ENCODE measurements at regions of chr10 and their contacts with region 1.

Region 1: GRCh38 chr10:34746094-34746493 is 69.0 kb downstream of the PARD3 start:
- DNase-seq: peak; percentile 66
- H3K4me3 Mint-ChIP-seq: no peak overlapping the region
- H3K27ac Mint-ChIP-seq: peak overlapping the region; percentile 12
- H3K4me1 Mint-ChIP-seq: peaks cover 52% of the 10 kb centered on the region
- H3K27me3 Mint-ChIP-seq: no peaks in the 10 kb centered on the region
- CTCF ChIP-seq: no peak

Region 2: GRCh38 chr10:34235164-34235832 is 510.8 kb before region 1 on chr10:
- CTCF ChIA-PET with region 1: no interaction called
- POLR2A ChIA-PET with region 1: no interaction called
- intact Hi-C with region 1: no loop called
- DNase-seq: peak; percentile 72
- H3K4me3 Mint-ChIP-seq: no peak overlapping the region
- H3K27ac Mint-ChIP-seq: no peak overlapping the region
- H3K4me1 Mint-ChIP-seq: no peaks in the 10 kb centered on the region
- H3K27me3 Mint-ChIP-seq: no peaks in the 10 kb centered on the region
- CTCF ChIP-seq: no peak

Region 3: GRCh38 chr10:34305190-34305589 is 440.9 kb before region 1 on chr10:
- CTCF ChIA-PET with region 1: no interaction called
- POLR2A ChIA-PET with region 1: no interaction called
- intact Hi-C with region 1: no loop called
- DNase-seq: peak; percentile 49
- H3K4me3 Mint-ChIP-seq: no peak overlapping the region
- H3K27ac Mint-ChIP-seq: peak overlapping the region; percentile 58
- H3K4me1 Mint-ChIP-seq: no peaks in the 10 kb centered on the region
- H3K27me3 Mint-ChIP-seq: no peaks in the 10 kb centered on the region
- CTCF ChIP-seq: no peak

Region 4: DNA sequence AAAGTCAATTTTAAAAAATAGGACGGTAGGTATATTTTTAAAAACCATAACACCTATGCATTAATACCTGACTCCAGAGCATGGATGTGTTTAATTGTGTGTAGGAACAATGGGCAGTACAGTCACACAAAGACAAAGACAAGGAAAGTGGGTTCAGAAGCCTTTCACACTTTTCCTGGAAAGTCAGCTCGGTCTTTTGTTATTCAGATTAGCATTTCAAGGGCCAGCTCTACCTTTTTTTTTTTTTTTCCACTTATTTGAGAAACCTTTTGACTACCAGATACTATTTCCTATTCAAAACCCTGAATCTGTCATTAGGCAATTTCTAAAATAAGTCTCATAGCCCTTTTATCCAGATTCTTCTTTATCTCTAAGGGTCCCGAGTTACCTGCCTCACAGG is 332.9 kb before region 1 on chr10:
- CTCF ChIA-PET with region 1: no interaction called
- POLR2A ChIA-PET with region 1: no interaction called
- intact Hi-C with region 1: no loop called
- DNase-seq: no peak
- H3K4me3 Mint-ChIP-seq: no peak overlapping the region
- H3K27ac Mint-ChIP-seq: no peak overlapping the region
- H3K4me1 Mint-ChIP-seq: no peaks in the 10 kb centered on the region
- H3K27me3 Mint-ChIP-seq: no peaks in the 10 kb centered on the region
- CTCF ChIP-seq: no peak

Region 5: DNA sequence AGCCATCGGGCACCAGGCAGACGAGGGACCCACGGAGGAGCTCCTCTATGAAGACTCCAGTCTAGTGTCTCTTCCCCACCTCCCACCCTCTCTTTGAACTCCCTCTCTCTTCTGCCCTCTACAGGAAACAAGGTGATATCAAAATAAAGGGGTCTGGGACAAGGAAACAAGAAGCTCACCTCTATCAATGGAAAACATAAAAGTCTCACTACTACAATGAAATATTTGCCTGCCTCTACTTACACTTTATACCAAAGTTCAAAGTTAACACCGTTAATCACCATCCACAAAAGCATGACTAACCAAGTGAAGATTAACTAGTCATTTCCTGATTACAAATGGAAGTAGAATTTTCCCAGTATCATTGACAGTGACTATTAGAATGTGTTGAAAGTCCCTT is 13.2 kb before region 1 on chr10:
- CTCF ChIA-PET with region 1: interaction called, 3 read pairs
- POLR2A ChIA-PET with region 1: interaction called, 22 read pairs
- intact Hi-C with region 1: no loop called
- DNase-seq: peak; percentile 41
- H3K4me3 Mint-ChIP-seq: no peak overlapping the region
- H3K27ac Mint-ChIP-seq: peak overlapping the region; percentile 86
- H3K4me1 Mint-ChIP-seq: peaks cover 21% of the 10 kb centered on the region
- H3K27me3 Mint-ChIP-seq: no peaks in the 10 kb centered on the region
- CTCF ChIP-seq: peak; percentile 19

Measured in MCF 10A (cell line).